Heart right ventricle (tissue), 16 donors: ENCODE measurements at regions of chr9 and their contacts with region 1.

Region 1: DNA sequence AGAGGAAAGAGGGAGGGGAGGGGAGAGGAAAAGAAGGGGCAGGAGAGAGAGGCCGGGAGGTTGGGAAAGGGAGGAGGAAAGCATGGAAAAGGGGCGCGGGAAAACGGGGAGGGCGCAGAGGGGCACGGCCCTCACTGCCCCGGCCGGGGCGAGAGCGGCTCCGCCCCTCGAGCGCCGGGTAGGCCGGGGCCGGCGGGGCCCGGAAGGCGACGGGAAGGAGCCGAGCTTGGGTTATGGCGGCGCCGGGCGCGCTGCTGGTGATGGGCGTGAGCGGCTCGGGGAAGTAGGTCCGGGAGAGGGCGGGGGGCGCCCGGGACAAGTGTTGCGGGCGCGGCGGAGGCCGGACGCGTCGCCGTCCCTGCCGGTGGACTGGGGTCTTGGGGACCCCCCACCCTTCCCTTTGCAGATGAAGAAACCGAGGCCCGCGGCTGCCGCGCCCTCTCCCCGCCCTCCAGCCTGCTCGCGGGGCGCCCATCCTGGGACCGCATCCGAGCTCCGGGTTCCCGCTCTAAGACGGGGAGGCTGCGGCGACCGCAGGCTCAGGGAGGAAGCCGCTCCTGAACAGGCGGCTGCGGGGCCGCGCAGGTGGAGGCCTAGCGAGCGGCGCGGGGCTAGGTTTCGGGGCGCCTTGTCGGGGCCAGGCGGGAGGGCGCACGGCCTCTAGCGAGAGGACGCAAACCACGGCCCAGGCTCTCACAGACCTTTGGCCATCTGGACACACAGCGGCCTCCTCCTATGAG is at the start of gene IDNK:
- DNase-seq: peak; percentile 64 to 72
- ATAC-seq: peak; percentile 89 to 95 (median 92)
- H3K4me3 ChIP-seq: peak within 1 kb of the TSS; percentile 74 to 99 (median 88)
- H3K27ac ChIP-seq: peak within 1 kb of the TSS; percentile 67 to 96 (median 92)
- H3K4me1 ChIP-seq: peaks cover 0 to 21% (median 9%) of the 10 kb centered on the region in 9 donors
- H3K27me3 ChIP-seq: no peaks in the 10 kb centered on the region
- CTCF ChIP-seq: no peak
- total RNA-seq, gene IDNK: 2.2 to 7.5 (median 4.2) TPM

Region 2: DNA sequence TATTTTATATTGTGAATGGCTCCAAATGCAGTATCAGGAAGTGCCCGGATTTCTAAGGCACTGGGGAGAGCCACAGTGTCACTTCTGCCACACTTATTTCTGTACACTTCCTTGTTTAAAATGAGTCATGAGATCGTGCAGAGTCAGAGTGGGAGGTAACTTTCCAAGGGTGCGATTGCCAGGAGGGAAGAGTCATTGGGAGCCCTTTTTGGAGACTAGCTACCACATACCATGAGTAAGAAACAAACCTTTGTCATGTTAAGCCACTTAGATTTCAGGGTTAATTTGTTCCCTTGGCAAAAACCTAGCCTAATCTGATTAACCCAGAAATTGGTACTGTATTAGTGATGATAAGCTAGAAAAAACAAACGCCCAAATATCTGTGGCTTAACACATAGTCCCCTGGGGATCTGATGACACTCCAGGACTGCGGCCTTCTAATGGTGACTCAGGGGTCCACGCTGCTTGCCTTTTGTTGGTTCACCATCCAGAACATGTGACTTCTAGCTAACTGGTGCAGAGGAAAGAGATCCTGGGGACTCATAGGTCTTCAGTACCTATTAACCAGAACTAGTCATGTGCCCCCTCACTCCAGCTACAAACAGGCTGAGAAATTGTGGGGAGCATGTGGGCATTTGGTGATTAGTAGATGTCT is 1885.1 kb before region 1 on chr9:
- intact Hi-C with region 1: no loop called
- DNase-seq: peak in 1 of 2 donors; percentile 11
- ATAC-seq: peak in 3 of 8 donors; percentile 25 to 83 (median 45)
- H3K4me3 ChIP-seq: no peak overlapping the region
- H3K27ac ChIP-seq: no peak overlapping the region
- H3K4me1 ChIP-seq: peaks cover 0 to 12% (median 0%) of the 10 kb centered on the region in 9 donors
- H3K27me3 ChIP-seq: no peaks in the 10 kb centered on the region
- CTCF ChIP-seq: no peak

Region 3: DNA sequence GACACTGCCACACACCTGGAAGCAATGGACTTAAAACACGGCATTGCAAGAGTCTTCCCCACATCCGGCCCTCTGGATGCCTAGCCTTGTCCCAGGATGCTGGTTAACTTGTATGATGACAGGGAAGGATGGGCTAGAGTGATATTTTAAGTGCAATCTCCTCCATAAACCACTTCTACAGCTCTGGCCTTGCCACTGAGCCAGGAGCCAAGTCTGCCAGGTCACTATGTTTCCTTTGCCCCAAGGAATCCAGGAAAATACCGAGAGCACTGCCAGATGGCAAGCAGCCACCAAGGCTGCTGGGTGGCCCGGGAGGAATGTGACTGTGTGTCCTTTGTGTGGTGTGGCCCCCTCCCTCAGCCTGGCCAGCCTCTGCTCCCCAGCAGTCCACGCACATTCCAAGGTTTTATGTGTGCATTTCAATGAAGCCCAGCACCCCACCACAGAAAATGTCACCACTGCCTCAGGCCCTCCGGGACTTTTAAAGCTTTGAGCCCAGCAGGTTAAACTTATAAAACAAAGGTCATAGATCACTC is 190.9 kb before region 1 on chr9:
- intact Hi-C with region 1: no loop called
- DNase-seq: peak; percentile 69 to 81
- ATAC-seq: peak; percentile 59 to 95 (median 87)
- H3K4me3 ChIP-seq: no peak overlapping the region
- H3K27ac ChIP-seq: peak overlapping the region in 8 of 10 donors; percentile 7 to 70 (median 38)
- H3K4me1 ChIP-seq: peaks cover 10 to 48% (median 32%) of the 10 kb centered on the region in 9 donors
- H3K27me3 ChIP-seq: no peaks in the 10 kb centered on the region
- CTCF ChIP-seq: no peak

Region 4: DNA sequence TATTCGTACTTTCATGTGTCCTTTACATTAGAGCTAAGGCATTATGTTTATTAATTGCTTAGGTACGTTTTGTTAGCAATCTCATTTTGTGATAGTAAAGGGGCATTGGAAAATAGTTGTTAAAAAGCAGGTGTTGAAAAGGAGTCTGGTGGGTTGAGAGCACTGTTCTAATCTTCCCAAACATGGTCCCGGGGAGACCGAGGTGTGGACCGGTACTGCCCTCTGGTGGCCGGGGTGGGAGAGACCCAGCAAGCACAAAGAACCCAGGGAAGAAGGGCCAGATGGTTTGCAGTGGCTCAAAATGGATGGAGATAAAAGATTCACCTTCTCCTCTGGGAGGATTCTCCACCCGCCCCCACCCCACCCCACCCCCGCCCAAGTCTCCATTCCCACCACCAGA is 26.0 kb after region 1 on chr9:
- intact Hi-C with region 1: loop called in 1 of 10 experiments (anchors 2 kb)
- DNase-seq: peak; percentile 58 to 75
- ATAC-seq: peak; percentile 65 to 89 (median 82)
- H3K4me3 ChIP-seq: no peak overlapping the region
- H3K27ac ChIP-seq: peak overlapping the region in 1 of 10 donors; percentile 37
- H3K4me1 ChIP-seq: peaks cover 0 to 11% (median 0%) of the 10 kb centered on the region in 9 donors
- H3K27me3 ChIP-seq: no peaks in the 10 kb centered on the region
- CTCF ChIP-seq: peak; percentile 54 to 78 (median 76)

Region 5: DNA sequence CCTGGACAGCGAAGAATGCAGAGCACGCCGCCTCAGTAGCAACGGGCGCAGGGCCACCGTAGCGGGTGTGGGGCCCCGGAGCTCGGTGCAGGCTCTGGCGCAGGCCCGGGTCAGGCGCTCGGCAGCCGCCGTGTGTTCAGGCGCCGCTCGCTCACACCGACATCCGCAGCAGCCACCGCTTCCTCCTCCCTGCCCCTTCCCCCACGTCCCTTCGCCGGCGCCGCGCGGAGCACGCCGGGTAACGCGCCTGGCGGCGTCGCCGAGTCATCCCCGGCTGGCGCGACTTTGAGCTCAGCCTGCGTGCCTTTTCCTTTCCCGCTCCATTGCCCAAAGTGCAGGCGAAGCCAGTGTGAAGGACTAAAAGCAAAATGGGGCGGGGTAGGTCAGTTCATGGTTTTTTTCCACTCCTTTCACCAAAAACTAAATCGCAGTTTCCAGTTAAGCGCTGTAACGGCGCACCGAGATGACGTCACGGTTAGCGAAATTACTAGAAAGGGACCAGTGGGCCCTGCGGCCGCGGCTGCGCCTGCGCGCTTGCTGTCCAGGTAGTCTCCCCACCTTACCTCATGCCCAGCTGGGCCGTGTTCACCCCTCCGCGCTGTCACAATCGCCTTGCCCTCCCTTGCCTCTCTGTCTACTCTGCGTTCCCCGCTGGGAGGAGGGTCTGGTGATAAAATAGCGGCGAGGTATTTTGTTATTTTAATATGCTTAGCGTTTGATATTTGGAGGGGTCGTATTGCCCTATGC is 84.8 kb after region 1 on chr9 and contains the start of gene UBQLN1:
- intact Hi-C with region 1: loop called in 5 of 10 experiments (anchors 5 kb)
- DNase-seq: peak; percentile 93 to 96
- ATAC-seq: peak; percentile 96 to 98 (median 97)
- H3K4me3 ChIP-seq: peak within 1 kb of the TSS; percentile 73 to 99 (median 95)
- H3K27ac ChIP-seq: peak within 1 kb of the TSS; percentile 94 to 99 (median 96)
- H3K4me1 ChIP-seq: peaks cover 0 to 46% (median 34%) of the 10 kb centered on the region in 9 donors
- H3K27me3 ChIP-seq: no peaks in the 10 kb centered on the region
- CTCF ChIP-seq: no peak
- total RNA-seq, gene UBQLN1: 86.1 to 123 (median 99.2) TPM

Region 6: DNA sequence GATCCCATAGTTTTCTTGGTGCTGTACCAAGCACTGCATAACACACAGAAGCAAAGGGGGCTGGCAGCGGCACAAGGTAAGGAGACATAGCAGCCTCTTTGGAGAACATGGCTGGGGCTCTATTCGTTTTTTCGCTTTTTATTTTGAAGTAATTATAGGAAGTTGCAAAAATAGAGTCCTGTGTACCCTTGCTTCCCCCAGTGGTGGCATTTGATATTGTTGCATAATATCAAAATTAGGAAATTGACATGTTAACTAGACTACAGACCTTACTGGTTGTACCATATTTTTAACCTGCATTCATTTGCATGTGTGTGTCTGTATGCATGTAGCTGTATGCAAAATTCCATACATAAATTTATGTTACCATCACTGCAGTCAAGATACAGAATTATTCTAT is 91.2 kb after region 1 on chr9:
- intact Hi-C with region 1: loop called in 5 of 10 experiments (anchors 5 kb)
- DNase-seq: no peak
- ATAC-seq: no peak
- H3K4me3 ChIP-seq: no peak overlapping the region
- H3K27ac ChIP-seq: no peak overlapping the region
- H3K4me1 ChIP-seq: no peaks in the 10 kb centered on the region
- H3K27me3 ChIP-seq: no peaks in the 10 kb centered on the region
- CTCF ChIP-seq: peak in 6 of 9 donors; percentile 15 to 36 (median 22)

Region 7: DNA sequence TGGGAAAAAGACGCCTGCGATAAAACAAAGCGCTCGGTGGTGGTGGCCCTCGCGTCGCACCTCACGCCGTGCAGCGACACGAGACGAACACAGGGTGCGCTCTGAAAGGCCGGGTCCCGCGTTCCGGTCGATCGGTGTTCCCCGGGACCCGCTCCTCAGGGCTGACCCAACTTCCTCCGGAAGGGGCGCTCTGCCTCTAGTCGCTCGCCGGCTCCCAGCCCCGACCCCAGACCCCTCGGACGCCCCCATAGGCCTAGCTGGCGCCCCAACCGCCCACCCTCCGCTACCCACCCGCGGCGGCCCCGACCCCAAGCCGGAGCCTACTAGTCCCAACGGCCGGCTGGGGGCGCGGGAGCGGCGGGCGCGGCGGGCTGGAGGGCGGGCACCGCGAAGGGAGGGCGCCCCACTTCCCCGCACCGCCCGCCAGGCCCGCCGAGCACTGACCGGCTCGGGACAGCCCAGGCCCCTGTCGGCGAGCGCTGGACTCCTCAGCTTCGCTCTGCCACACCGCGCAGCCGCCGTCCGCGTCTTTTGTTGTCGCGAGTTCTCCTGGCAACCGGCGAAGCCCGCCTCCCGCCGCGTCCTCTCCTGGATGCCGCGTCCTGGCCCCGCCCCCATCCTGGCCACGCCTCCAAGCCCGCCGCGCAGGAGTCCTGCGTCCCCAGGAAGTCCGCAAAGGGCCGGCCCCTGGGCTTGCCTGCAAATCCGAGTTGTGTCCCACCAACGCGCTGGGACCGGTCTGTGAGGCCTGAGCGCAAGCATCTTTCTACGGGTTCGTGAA is 298.0 kb after region 1 on chr9 and contains the start of gene KIF27:
- intact Hi-C with region 1: loop called in 6 of 10 experiments (anchors 10 kb)
- DNase-seq: peak; percentile 99 to 100
- ATAC-seq: peak; percentile 98 to 100 (median 99)
- H3K4me3 ChIP-seq: peak within 1 kb of the TSS; percentile 58 to 84 (median 78)
- H3K27ac ChIP-seq: peak within 1 kb of the TSS; percentile 50 to 96 (median 93)
- H3K4me1 ChIP-seq: peaks cover 0 to 16% (median 8%) of the 10 kb centered on the region in 9 donors
- H3K27me3 ChIP-seq: no peaks in the 10 kb centered on the region
- CTCF ChIP-seq: peak in 8 of 9 donors; percentile 14 to 64 (median 48)
- total RNA-seq, gene KIF27: 2.1 to 6.3 (median 3.2) TPM

Region 8: DNA sequence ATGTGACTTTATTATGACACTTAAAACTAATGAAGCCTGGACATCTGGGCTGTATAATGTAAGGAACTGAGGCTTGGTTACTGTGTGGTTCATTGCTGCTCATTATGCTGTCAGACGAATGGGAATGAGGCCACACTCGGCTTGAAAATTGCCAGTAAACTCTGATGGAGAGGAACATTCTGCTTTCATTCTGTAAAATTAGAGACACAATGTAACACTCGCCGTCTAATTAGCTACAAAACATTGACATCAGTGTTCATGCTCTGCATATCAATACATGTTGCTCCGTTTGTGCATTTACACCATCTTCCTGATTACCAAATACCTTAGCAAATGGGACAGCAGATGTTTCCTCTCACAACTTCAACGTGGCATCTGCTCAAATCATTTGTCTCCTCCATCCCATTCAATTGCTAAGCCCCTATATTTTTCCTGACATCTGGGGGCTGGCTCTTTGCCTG is 584.4 kb after region 1 on chr9:
- intact Hi-C with region 1: no loop called
- DNase-seq: peak in 1 of 2 donors; percentile 9
- ATAC-seq: peak in 4 of 8 donors; percentile 33 to 73 (median 51)
- H3K4me3 ChIP-seq: peak overlapping the region in 2 of 10 donors; percentile 15 to 18
- H3K27ac ChIP-seq: peak overlapping the region in 5 of 10 donors; percentile 6 to 62 (median 42)
- H3K4me1 ChIP-seq: peaks cover 0 to 16% (median 5%) of the 10 kb centered on the region in 9 donors
- H3K27me3 ChIP-seq: no peaks in the 10 kb centered on the region
- CTCF ChIP-seq: no peak